Caco-2 (cell line): ENCODE measurements at regions of chr5 and their contacts with region 1.

Region 1: GRCh38 chr5:74640450-74640953 is at the start of gene ENC1:
- DNase-seq: peak; percentile 93 to 94
- H3K4me3 ChIP-seq: peak within 1 kb of the TSS; percentile 99
- H3K4me3 Mint-ChIP-seq: peak within 1 kb of the TSS; percentile 93
- H3K27ac Mint-ChIP-seq: peak within 1 kb of the TSS; percentile 93
- H3K4me1 ChIP-seq: peaks cover 39% of the 10 kb centered on the region
- H3K4me1 Mint-ChIP-seq: peaks cover 39% of the 10 kb centered on the region
- H3K27me3 ChIP-seq: no peaks in the 10 kb centered on the region
- H3K27me3 Mint-ChIP-seq: no peaks in the 10 kb centered on the region
- CTCF ChIP-seq: peak; percentile 44 to 51
- total RNA-seq, gene ENC1: 92.7 and 106 TPM in 2 replicates

Region 2: DNA sequence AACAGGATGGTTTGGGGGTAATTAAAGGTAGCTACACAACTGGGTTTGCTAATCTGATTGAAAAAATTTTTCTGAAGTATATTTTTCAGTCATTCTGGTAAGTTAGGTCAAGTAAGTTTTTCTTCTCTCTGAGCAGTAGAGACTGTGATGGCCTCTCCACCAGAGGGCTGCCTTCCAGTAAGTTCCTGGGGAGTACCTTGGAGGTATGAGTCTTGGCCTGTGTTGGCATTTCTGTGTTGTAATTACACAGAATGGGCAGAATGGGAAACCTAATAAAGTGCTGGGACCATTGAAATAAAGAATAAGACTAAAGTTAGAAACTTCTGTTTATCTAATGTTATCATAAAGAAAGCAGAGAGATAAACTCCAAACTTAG is 583.7 kb before region 1 on chr5:
- CTCF ChIA-PET with region 1: no interaction called
- POLR2A ChIA-PET with region 1: no interaction called
- intact Hi-C with region 1: loop called (anchors 1 kb)
- DNase-seq: peak in 1 of 2 experiments; percentile 40
- H3K4me3 ChIP-seq: no peak overlapping the region
- H3K4me3 Mint-ChIP-seq: no peak overlapping the region
- H3K27ac Mint-ChIP-seq: no peak overlapping the region
- H3K4me1 ChIP-seq: no peaks in the 10 kb centered on the region
- H3K4me1 Mint-ChIP-seq: peaks cover 6% of the 10 kb centered on the region
- H3K27me3 ChIP-seq: no peaks in the 10 kb centered on the region
- H3K27me3 Mint-ChIP-seq: no peaks in the 10 kb centered on the region
- CTCF ChIP-seq: peak; percentile 31 to 63

Region 3: DNA sequence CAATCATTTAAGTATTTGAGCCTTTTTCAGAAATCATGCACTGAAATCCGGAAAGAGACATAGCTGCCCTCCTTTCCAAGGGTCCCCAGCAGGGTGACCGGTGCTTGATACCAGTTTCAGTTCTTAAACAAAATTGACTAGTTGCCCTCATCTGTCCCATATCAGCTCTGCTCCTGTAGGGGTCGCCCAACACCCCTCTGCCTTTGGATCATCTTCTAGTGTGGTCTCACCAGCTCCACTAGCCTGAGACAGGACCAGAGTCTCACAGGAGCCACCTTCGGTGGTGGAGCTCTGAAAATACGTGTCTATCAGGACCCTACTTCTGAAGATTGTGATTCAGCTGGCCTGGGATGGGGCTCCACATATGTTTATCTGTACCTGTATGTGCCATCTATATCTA is 428.2 kb before region 1 on chr5:
- CTCF ChIA-PET with region 1: interaction called, 4 read pairs
- POLR2A ChIA-PET with region 1: no interaction called
- intact Hi-C with region 1: loop called (anchors 2 kb)
- DNase-seq: peak; percentile 47 to 55
- H3K4me3 ChIP-seq: no peak overlapping the region
- H3K4me3 Mint-ChIP-seq: no peak overlapping the region
- H3K27ac Mint-ChIP-seq: no peak overlapping the region
- H3K4me1 ChIP-seq: peaks cover 3% of the 10 kb centered on the region; the same call in 1 of the 2 replicates
- H3K4me1 Mint-ChIP-seq: no peaks in the 10 kb centered on the region
- H3K27me3 ChIP-seq: no peaks in the 10 kb centered on the region
- H3K27me3 Mint-ChIP-seq: no peaks in the 10 kb centered on the region
- CTCF ChIP-seq: peak; percentile 25 to 49

Region 4: GRCh38 chr5:74394916-74395781 is 245.4 kb before region 1 on chr5:
- CTCF ChIA-PET with region 1: interaction called, 6 read pairs
- POLR2A ChIA-PET with region 1: interaction called, 5 read pairs
- intact Hi-C with region 1: loop called (anchors 1 kb)
- DNase-seq: peak; percentile 81 to 91
- H3K4me3 ChIP-seq: no peak overlapping the region
- H3K4me3 Mint-ChIP-seq: no peak overlapping the region
- H3K27ac Mint-ChIP-seq: peak overlapping the region; percentile 83
- H3K4me1 ChIP-seq: peaks cover 47% of the 10 kb centered on the region
- H3K4me1 Mint-ChIP-seq: peaks cover 42% of the 10 kb centered on the region
- H3K27me3 ChIP-seq: no peaks in the 10 kb centered on the region
- H3K27me3 Mint-ChIP-seq: no peaks in the 10 kb centered on the region
- CTCF ChIP-seq: peak; percentile 36 to 51

Region 5: GRCh38 chr5:74500110-74500917 is 140.2 kb before region 1 on chr5:
- CTCF ChIA-PET with region 1: interaction called, 3 read pairs
- POLR2A ChIA-PET with region 1: interaction called, 8 read pairs
- intact Hi-C with region 1: loop called (anchors 5 kb)
- DNase-seq: no peak
- H3K4me3 ChIP-seq: no peak overlapping the region
- H3K4me3 Mint-ChIP-seq: peak overlapping the region; percentile 7
- H3K27ac Mint-ChIP-seq: peak overlapping the region; percentile 64
- H3K4me1 ChIP-seq: peaks cover 46% of the 10 kb centered on the region
- H3K4me1 Mint-ChIP-seq: peaks cover 44% of the 10 kb centered on the region
- H3K27me3 ChIP-seq: no peaks in the 10 kb centered on the region
- H3K27me3 Mint-ChIP-seq: no peaks in the 10 kb centered on the region
- CTCF ChIP-seq: no peak

Region 6: GRCh38 chr5:74581988-74582365 is 58.5 kb before region 1 on chr5:
- CTCF ChIA-PET with region 1: no interaction called
- POLR2A ChIA-PET with region 1: no interaction called
- intact Hi-C with region 1: loop called (anchors 1 kb)
- DNase-seq: no peak
- H3K4me3 ChIP-seq: no peak overlapping the region
- H3K4me3 Mint-ChIP-seq: peak overlapping the region; percentile 35
- H3K27ac Mint-ChIP-seq: peak overlapping the region; percentile 97
- H3K4me1 ChIP-seq: peaks cover 63% of the 10 kb centered on the region
- H3K4me1 Mint-ChIP-seq: peaks cover 39% of the 10 kb centered on the region
- H3K27me3 ChIP-seq: no peaks in the 10 kb centered on the region
- H3K27me3 Mint-ChIP-seq: no peaks in the 10 kb centered on the region
- CTCF ChIP-seq: no peak

Region 7: DNA sequence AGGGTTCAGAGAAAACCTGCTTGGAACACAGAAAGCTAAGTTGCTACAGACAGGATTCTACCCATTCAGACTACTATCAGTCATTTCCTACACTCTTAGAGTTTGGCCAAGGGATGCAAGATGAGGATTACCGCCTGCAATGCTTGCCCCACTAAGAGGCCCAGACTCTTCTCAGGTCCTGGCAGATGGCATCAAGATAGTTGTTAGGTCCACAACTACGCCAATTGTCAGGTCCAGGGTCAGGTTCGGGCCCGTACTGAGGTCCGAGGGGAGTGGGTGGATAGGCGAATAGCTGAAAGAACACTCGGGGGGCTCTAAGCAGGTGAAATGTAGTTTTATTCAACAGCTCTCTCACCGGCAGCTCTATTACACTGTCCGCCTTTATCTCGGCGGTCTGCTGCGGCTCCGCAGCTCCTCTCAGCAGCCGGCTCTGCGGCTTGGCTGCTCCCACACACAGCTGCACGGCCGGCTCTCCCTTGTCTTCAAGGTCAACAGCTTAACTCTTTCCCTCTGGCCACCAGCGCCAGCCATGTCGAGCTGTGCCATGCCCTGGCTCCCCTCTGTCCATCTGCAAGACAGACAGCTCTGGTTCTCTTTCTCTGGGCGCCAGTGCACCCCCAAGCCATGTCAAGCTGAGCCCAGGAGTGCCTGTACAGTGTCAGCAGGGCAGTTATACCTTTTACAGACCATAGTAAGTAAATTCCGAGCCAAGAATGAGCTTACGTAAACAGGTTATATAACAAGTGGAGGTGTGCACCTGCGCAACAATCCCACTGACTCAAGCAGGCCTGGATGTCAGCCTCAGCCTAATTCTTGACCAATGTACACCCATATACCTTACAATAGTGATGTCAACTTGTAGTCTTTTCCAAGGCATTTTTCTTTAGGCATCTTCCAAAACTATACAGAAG is 24.0 kb before region 1 on chr5:
- CTCF ChIA-PET with region 1: interaction called, 3 read pairs
- POLR2A ChIA-PET with region 1: interaction called, 13 read pairs
- intact Hi-C with region 1: no loop called
- DNase-seq: peak in 1 of 2 experiments; percentile 23
- H3K4me3 ChIP-seq: no peak overlapping the region
- H3K4me3 Mint-ChIP-seq: no peak overlapping the region
- H3K27ac Mint-ChIP-seq: peak overlapping the region; percentile 71
- H3K4me1 ChIP-seq: peaks cover 40% of the 10 kb centered on the region
- H3K4me1 Mint-ChIP-seq: peaks cover 39% of the 10 kb centered on the region
- H3K27me3 ChIP-seq: no peaks in the 10 kb centered on the region
- H3K27me3 Mint-ChIP-seq: no peaks in the 10 kb centered on the region
- CTCF ChIP-seq: no peak

Region 8: GRCh38 chr5:74684900-74685851 is 44.7 kb after region 1 on chr5 and contains the start of gene HEXB:
- CTCF ChIA-PET with region 1: no interaction called
- POLR2A ChIA-PET with region 1: no interaction called
- intact Hi-C with region 1: no loop called
- DNase-seq: peak; percentile 93 to 94
- H3K4me3 ChIP-seq: peak within 1 kb of the TSS; percentile 96
- H3K4me3 Mint-ChIP-seq: peak within 1 kb of the TSS; percentile 71
- H3K27ac Mint-ChIP-seq: peak within 1 kb of the TSS; percentile 8
- H3K4me1 ChIP-seq: peaks cover 13% of the 10 kb centered on the region
- H3K4me1 Mint-ChIP-seq: peaks cover 27% of the 10 kb centered on the region
- H3K27me3 ChIP-seq: no peaks in the 10 kb centered on the region
- H3K27me3 Mint-ChIP-seq: no peaks in the 10 kb centered on the region
- CTCF ChIP-seq: peak in 1 of 2 experiments; percentile 7
- total RNA-seq, gene HEXB: 217 and 230 TPM in 2 replicates

Region 9: DNA sequence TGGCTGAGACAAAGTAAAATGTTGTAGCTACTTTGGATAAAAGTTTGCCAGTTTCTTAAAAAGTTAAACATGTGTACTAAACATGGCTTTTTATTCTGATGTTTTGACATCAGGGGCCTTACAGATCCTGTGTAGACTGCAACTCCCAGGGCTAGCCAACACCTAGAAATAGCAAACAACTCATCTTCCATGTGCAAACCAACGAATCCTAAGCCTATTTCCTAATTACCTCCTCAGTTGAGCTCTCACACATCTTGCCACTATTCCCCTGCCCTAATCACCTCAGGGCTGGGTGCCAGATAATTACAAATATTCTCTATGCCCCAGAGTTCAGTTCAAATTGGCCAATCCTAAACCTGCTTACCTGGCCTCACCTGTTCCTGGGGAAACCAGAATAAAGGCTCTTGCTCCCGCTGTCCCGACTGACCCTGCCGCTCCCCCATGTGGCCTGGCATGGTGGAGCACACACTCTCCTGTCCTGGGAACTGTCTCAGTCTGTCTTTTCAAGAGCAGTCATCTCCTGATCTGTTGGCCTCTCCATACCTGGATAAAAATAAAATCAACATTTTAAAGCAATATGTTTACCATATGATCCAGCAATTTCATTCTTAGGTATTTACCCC is 262.8 kb after region 1 on chr5:
- CTCF ChIA-PET with region 1: no interaction called
- POLR2A ChIA-PET with region 1: no interaction called
- intact Hi-C with region 1: no loop called
- DNase-seq: peak; percentile 81 to 84
- H3K4me3 ChIP-seq: no peak overlapping the region
- H3K4me3 Mint-ChIP-seq: no peak overlapping the region
- H3K27ac Mint-ChIP-seq: no peak overlapping the region
- H3K4me1 ChIP-seq: peaks cover 7% of the 10 kb centered on the region; the same call in 1 of the 2 replicates
- H3K4me1 Mint-ChIP-seq: peaks cover 7% of the 10 kb centered on the region
- H3K27me3 ChIP-seq: no peaks in the 10 kb centered on the region
- H3K27me3 Mint-ChIP-seq: no peaks in the 10 kb centered on the region
- CTCF ChIP-seq: peak; percentile 83 to 93